Tibial artery (tissue), 4 donors: ENCODE measurements at regions of chr20 and their contacts with region 1.

Region 1: GRCh38 chr20:40689943-40690835 is 1.2 kb upstream of the MAFB start:
- DNase-seq: peak; percentile 94 to 96
- H3K4me3 ChIP-seq: peak overlapping the region; percentile 64 to 73
- H3K27ac ChIP-seq: peak overlapping the region; percentile 95 to 99
- H3K4me1 ChIP-seq: peaks cover 0 to 42% (median 24%) of the 10 kb centered on the region in 4 donors
- H3K27me3 ChIP-seq: peaks cover 0 to 45% of the 10 kb centered on the region in 2 donors
- CTCF ChIP-seq: peak; percentile 91 to 94

Region 2: DNA sequence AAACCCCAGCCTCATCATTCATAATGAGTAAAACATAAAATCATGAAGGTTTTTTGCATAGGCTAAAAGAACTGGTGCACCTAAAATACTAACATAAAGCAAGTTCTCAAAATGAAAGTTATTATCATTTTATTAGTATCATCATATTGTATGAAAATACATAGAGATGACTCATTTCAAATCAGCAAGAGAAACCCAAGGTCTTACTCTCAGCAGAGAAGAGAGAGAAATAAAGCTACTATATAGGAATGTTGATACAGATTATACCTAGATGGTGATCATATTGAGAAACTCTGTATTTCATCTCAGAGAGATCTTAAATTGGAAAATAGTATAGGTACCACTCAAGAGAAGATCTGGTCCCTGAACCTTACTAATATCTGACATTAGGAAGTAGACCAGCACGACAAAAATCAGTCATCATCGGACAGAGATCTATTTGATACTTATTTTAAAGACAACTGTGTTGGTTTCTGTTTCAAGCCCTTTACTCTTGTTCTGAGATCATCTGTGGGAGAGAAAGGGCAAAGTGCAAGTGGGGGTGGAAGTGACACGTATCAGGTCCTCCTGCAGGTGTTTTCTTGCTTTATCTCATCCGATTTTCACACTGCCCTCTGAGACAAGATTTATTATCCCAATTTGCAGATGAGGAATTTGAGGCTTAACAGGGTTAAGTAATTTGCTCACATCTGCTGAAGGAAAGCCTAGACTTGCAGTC is 533.4 kb before region 1 on chr20:
- intact Hi-C with region 1: loop called (anchors 5 kb)
- DNase-seq: no peak
- H3K4me3 ChIP-seq: no peak overlapping the region
- H3K27ac ChIP-seq: no peak overlapping the region
- H3K4me1 ChIP-seq: no peaks in the 10 kb centered on the region
- H3K27me3 ChIP-seq: no peaks in the 10 kb centered on the region
- CTCF ChIP-seq: no peak

Region 3: DNA sequence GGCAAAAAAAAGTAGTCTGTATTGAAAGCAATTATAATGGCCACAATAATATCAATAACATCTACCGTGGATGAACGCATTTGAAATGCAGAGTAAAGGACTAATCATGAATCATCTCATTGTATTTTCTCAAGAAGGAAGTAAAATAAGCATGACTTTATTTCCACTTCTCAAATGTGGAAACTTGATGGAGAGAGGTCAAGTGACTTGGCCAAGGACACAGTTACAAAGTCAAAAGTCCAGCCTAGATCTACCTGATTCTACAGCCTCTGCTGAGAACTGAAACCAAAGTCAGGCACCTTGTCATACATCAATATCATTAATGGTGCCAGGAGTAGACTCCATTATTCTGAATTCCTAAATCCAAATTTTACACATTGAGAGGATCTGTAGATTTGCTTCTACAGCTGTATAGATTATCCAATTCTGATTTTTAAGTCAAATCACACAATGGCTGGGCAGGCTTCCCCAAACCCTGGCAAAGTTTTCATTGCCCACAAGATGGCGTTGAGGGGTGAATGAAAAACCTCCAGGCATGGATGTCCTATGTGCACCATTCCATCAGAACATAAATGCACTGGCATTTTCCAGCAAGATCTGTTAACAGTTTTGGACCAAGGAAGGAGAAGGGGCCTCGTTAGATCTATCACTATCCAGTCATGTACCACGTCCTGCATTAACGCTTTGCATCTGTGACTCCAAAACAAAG is 424.2 kb before region 1 on chr20:
- intact Hi-C with region 1: loop called (anchors 5 kb)
- DNase-seq: no peak
- H3K4me3 ChIP-seq: no peak overlapping the region
- H3K27ac ChIP-seq: no peak overlapping the region
- H3K4me1 ChIP-seq: no peaks in the 10 kb centered on the region
- H3K27me3 ChIP-seq: no peaks in the 10 kb centered on the region
- CTCF ChIP-seq: peak; percentile 56 to 62

Region 4: GRCh38 chr20:40506567-40506966 is 183.6 kb before region 1 on chr20:
- intact Hi-C with region 1: loop called (anchors 10 kb)
- DNase-seq: peak; percentile 98 to 99
- H3K4me3 ChIP-seq: no peak overlapping the region
- H3K27ac ChIP-seq: peak overlapping the region; percentile 17 to 45
- H3K4me1 ChIP-seq: peaks cover 0 to 24% (median 7%) of the 10 kb centered on the region in 4 donors
- H3K27me3 ChIP-seq: no peaks in the 10 kb centered on the region
- CTCF ChIP-seq: peak in 1 of 2 experiments; percentile 11